Astrocyte of the cerebellum (primary cell): ENCODE measurements at regions of chr10 and their contacts with region 1.

Region 1: GRCh38 chr10:60618861-60619260 is 159.4 kb upstream of the CDK1 start:
- DNase-seq: no peak
- H3K4me3 ChIP-seq: no peak overlapping the region
- CTCF ChIP-seq: no peak

Region 2: GRCh38 chr10:60549686-60550085 is 69.2 kb before region 1 on chr10:
- in situ Hi-C with region 1: loop called (anchors 5 kb)
- DNase-seq: peak; percentile 5
- H3K4me3 ChIP-seq: no peak overlapping the region
- CTCF ChIP-seq: peak; percentile 27